ENCODE measurements at regions of chr7 and their contacts with region 1.

Region 1: DNA sequence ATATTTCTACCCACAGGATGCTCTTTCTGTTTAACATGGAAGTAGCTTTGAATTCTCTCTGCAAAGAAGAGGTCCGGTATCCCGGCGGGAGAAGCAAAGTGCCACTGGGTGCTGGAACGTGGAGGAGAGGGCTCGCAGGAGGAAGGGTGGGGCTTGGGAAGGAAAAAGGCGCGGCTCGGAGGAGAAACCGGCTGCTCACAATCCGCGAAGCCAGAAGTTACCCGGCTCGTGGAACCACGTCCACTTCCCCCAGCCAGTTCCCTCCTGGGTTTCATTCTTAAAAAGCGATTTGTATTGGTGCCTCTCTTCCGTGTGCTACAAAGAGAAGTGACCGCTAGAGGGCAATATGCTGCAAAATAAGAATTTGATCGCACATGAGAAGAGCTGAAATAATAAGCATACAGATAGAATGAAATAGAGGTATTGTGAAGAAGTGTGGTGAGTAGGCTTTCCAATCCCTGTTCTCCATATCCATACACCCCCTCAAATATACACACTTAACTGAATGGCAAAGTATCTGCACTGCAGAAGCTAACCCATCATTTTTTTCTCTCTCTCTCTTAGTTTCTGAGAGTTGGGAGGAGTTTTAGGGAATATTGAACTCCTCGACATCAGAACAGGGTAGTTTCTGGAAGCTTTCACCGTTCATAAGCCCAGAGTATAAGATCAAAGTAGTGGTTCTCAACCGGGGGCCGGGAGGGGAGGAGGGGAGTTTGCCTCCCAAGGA is 31.1 kb downstream of the TRIL start:
- DNase-seq: peak; percentile 67
- ATAC-seq: peak; percentile 88
- H3K4me3 Mint-ChIP-seq: peak overlapping the region; percentile 78
- H3K27ac Mint-ChIP-seq: peak overlapping the region; percentile 51
- H3K4me1 Mint-ChIP-seq: peaks cover 20% of the 10 kb centered on the region
- H3K27me3 Mint-ChIP-seq: peaks cover 6% of the 10 kb centered on the region
- CTCF ChIP-seq: peak; percentile 75

Region 2: GRCh38 chr7:28458732-28459131 is 468.3 kb before region 1 on chr7:
- CTCF ChIA-PET with region 1: no interaction called
- POLR2A ChIA-PET with region 1: no interaction called
- intact Hi-C with region 1: no loop called
- DNase-seq: no peak
- ATAC-seq: no peak
- H3K4me3 Mint-ChIP-seq: no peak overlapping the region
- H3K27ac Mint-ChIP-seq: no peak overlapping the region
- H3K4me1 Mint-ChIP-seq: no peaks in the 10 kb centered on the region
- H3K27me3 Mint-ChIP-seq: peaks cover 7% of the 10 kb centered on the region
- CTCF ChIP-seq: no peak

Region 3: GRCh38 chr7:28738412-28738811 is 188.6 kb before region 1 on chr7:
- CTCF ChIA-PET with region 1: no interaction called
- POLR2A ChIA-PET with region 1: no interaction called
- intact Hi-C with region 1: no loop called
- DNase-seq: no peak
- ATAC-seq: no peak
- H3K4me3 Mint-ChIP-seq: no peak overlapping the region
- H3K27ac Mint-ChIP-seq: no peak overlapping the region
- H3K4me1 Mint-ChIP-seq: no peaks in the 10 kb centered on the region
- H3K27me3 Mint-ChIP-seq: peaks cover 2% of the 10 kb centered on the region
- CTCF ChIP-seq: no peak

Region 4: GRCh38 chr7:28847681-28848080 is 79.4 kb before region 1 on chr7:
- CTCF ChIA-PET with region 1: no interaction called
- POLR2A ChIA-PET with region 1: no interaction called
- intact Hi-C with region 1: no loop called
- DNase-seq: no peak
- ATAC-seq: no peak
- H3K4me3 Mint-ChIP-seq: no peak overlapping the region
- H3K27ac Mint-ChIP-seq: no peak overlapping the region
- H3K4me1 Mint-ChIP-seq: no peaks in the 10 kb centered on the region
- H3K27me3 Mint-ChIP-seq: peaks cover 16% of the 10 kb centered on the region
- CTCF ChIP-seq: no peak

Region 5: GRCh38 chr7:28858206-28858605 is 68.8 kb before region 1 on chr7:
- CTCF ChIA-PET with region 1: no interaction called
- POLR2A ChIA-PET with region 1: no interaction called
- intact Hi-C with region 1: no loop called
- DNase-seq: no peak
- ATAC-seq: no peak
- H3K4me3 Mint-ChIP-seq: no peak overlapping the region
- H3K27ac Mint-ChIP-seq: no peak overlapping the region
- H3K4me1 Mint-ChIP-seq: peaks cover 5% of the 10 kb centered on the region
- H3K27me3 Mint-ChIP-seq: peaks cover 35% of the 10 kb centered on the region
- CTCF ChIP-seq: no peak

Region 6: DNA sequence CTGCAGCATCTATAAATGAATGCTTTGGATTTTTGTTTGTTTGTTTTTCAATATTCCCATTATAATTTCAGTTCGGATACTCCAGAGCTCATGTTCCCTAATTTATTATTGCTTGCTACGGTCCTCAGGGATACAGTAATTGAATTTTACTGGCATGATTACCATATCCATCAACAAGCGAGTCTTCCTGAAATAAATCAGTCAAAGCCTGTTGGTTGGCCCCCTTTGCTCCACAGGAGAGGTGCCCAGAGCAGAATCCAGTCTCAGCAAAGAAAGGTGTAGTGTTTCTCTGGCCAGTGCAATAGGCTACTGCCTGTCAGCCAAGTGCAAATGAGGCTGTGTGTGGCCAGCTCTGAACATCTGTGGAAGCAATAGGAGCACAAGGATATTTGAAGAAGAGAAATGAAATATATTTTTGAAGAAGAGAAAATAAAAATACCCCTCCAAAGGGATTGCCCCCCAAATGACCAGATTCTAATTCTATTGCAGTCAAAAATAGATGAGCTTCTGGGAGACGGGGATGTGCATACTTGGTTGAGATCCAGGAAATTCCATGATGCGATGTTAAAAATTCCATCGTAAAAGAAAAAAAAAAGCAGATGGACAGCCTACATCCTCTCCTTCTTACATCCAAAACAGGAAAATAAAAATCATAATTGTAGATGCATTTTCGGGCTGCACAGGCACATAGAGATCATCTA is 13.0 kb after region 1 on chr7:
- CTCF ChIA-PET with region 1: interaction called, 43 read pairs
- POLR2A ChIA-PET with region 1: no interaction called
- intact Hi-C with region 1: no loop called
- DNase-seq: no peak
- ATAC-seq: no peak
- H3K4me3 Mint-ChIP-seq: no peak overlapping the region
- H3K27ac Mint-ChIP-seq: no peak overlapping the region
- H3K4me1 Mint-ChIP-seq: no peaks in the 10 kb centered on the region
- H3K27me3 Mint-ChIP-seq: peaks cover 10% of the 10 kb centered on the region
- CTCF ChIP-seq: no peak

Region 7: GRCh38 chr7:28961972-28962371 is 34.9 kb after region 1 on chr7:
- CTCF ChIA-PET with region 1: interaction called, 58 read pairs
- POLR2A ChIA-PET with region 1: no interaction called
- intact Hi-C with region 1: no loop called
- DNase-seq: no peak
- ATAC-seq: no peak
- H3K4me3 Mint-ChIP-seq: no peak overlapping the region
- H3K27ac Mint-ChIP-seq: no peak overlapping the region
- H3K4me1 Mint-ChIP-seq: peaks cover 6% of the 10 kb centered on the region
- H3K27me3 Mint-ChIP-seq: peaks cover 25% of the 10 kb centered on the region
- CTCF ChIP-seq: no peak

Region 8: GRCh38 chr7:29105752-29106668 is 179.0 kb after region 1 on chr7:
- CTCF ChIA-PET with region 1: interaction called, 331 read pairs
- POLR2A ChIA-PET with region 1: no interaction called
- intact Hi-C with region 1: loop called (anchors 2 kb)
- DNase-seq: peak; percentile 22
- ATAC-seq: peak; percentile 82
- H3K4me3 Mint-ChIP-seq: no peak overlapping the region
- H3K27ac Mint-ChIP-seq: no peak overlapping the region
- H3K4me1 Mint-ChIP-seq: no peaks in the 10 kb centered on the region
- H3K27me3 Mint-ChIP-seq: no peaks in the 10 kb centered on the region
- CTCF ChIP-seq: peak; percentile 70

Region 9: DNA sequence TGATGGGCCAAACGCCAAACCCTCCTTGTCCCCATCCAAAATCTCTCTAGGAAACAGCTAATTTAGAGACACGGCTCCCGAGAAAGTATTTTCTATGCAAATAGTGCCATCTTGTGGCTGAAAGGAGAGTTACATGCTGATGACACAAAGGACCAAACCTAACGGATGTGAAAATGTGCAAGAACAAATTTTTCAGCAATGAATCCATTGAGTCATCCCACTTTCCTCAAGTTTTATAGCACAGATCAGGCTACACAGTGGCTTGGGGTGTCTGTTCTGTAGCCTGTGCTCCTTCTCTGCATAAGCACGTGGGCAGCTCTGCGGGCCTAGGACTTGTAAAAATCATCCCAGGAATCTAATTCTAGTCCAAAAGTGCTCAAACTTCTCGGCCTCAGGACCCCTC is 481.8 kb after region 1 on chr7:
- CTCF ChIA-PET with region 1: interaction called, 172 read pairs
- POLR2A ChIA-PET with region 1: no interaction called
- intact Hi-C with region 1: loop called (anchors 2 kb)
- DNase-seq: peak; percentile 62
- ATAC-seq: peak; percentile 67
- H3K4me3 Mint-ChIP-seq: no peak overlapping the region
- H3K27ac Mint-ChIP-seq: no peak overlapping the region
- H3K4me1 Mint-ChIP-seq: no peaks in the 10 kb centered on the region
- H3K27me3 Mint-ChIP-seq: no peaks in the 10 kb centered on the region
- CTCF ChIP-seq: peak; percentile 83

Measured in activated CD8-positive, alpha-beta T cell treated with anti-CD3 and anti-CD28 coated beads for 36 hours (primary cell).